ENCODE measurements at regions of chr18 and their contacts with region 1.

Region 1: GRCh38 chr18:22703883-22704585 is 229.1 kb upstream of the RBBP8 start:
- DNase-seq: no peak
- ATAC-seq: peak; percentile 93
- H3K4me3 ChIP-seq: no peak overlapping the region
- H3K27ac ChIP-seq: no peak overlapping the region
- H3K4me1 ChIP-seq: no peaks in the 10 kb centered on the region
- H3K27me3 ChIP-seq: no peaks in the 10 kb centered on the region
- CTCF ChIP-seq: peak; percentile 67 to 75 (median 74)
- EP300 ChIP-seq: no peak
- POLR2A ChIP-seq: no peak
- RAD21 ChIP-seq: peak; percentile 81

Region 2: DNA sequence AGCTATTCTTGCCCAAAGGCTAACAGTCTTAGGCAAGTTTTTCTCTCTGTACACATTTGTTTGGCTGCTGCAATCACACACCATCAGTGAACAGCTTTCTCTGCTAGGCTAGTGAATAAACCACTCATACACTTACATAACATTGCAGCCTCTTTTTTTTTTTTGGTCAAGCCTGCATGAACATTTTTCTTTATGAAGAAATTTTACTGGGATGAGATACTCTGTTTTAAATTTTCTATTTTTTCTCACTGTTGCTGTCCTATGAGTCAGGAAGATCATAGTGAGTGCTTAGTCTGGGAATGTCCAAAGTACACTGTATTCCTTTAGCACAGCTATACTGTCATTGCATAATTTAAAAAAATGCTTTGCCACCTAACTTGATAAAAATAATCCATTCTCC is 1650.9 kb before region 1 on chr18:
- CTCF ChIA-PET with region 1: no interaction called
- POLR2A ChIA-PET with region 1: no interaction called
- RAD21 ChIA-PET with region 1: no interaction called
- SMC1A ChIA-PET with region 1: no interaction called
- in situ Hi-C with region 1: loop called (anchors 25 kb)
- intact Hi-C with region 1: no loop called
- DNase-seq: no peak
- ATAC-seq: no peak
- H3K4me3 ChIP-seq: no peak overlapping the region
- H3K27ac ChIP-seq: no peak overlapping the region
- H3K4me1 ChIP-seq: no peaks in the 10 kb centered on the region; the same call in 1 of the 2 replicates
- H3K27me3 ChIP-seq: no peaks in the 10 kb centered on the region
- CTCF ChIP-seq: no peak
- EP300 ChIP-seq: no peak
- POLR2A ChIP-seq: no peak
- RAD21 ChIP-seq: no peak

Region 3: GRCh38 chr18:21489119-21489750 is 1214.8 kb before region 1 on chr18:
- CTCF ChIA-PET with region 1: no interaction called
- POLR2A ChIA-PET with region 1: no interaction called
- RAD21 ChIA-PET with region 1: no interaction called
- SMC1A ChIA-PET with region 1: no interaction called
- in situ Hi-C with region 1: loop called (anchors 10 kb)
- intact Hi-C with region 1: no loop called
- DNase-seq: no peak
- ATAC-seq: peak; percentile 90
- H3K4me3 ChIP-seq: no peak overlapping the region
- H3K27ac ChIP-seq: no peak overlapping the region
- H3K4me1 ChIP-seq: no peaks in the 10 kb centered on the region
- H3K27me3 ChIP-seq: no peaks in the 10 kb centered on the region
- CTCF ChIP-seq: peak; percentile 73 to 76 (median 75)
- EP300 ChIP-seq: no peak
- POLR2A ChIP-seq: no peak
- RAD21 ChIP-seq: peak; percentile 73

Region 4: GRCh38 chr18:21997207-21998143 is 706.6 kb before region 1 on chr18:
- CTCF ChIA-PET with region 1: interaction called, 6 read pairs
- POLR2A ChIA-PET with region 1: no interaction called
- RAD21 ChIA-PET with region 1: no interaction called
- SMC1A ChIA-PET with region 1: interaction called, 3 read pairs
- in situ Hi-C with region 1: loop called (anchors 10 kb)
- intact Hi-C with region 1: loop called (anchors 10 kb)
- DNase-seq: peak; percentile 9
- ATAC-seq: peak; percentile 79
- H3K4me3 ChIP-seq: no peak overlapping the region
- H3K27ac ChIP-seq: no peak overlapping the region
- H3K4me1 ChIP-seq: no peaks in the 10 kb centered on the region
- H3K27me3 ChIP-seq: no peaks in the 10 kb centered on the region
- CTCF ChIP-seq: peak; percentile 73 to 86 (median 83)
- EP300 ChIP-seq: no peak
- POLR2A ChIP-seq: no peak
- RAD21 ChIP-seq: peak; percentile 60

Region 5: GRCh38 chr18:22609642-22610041 is 94.4 kb before region 1 on chr18:
- CTCF ChIA-PET with region 1: no interaction called
- POLR2A ChIA-PET with region 1: no interaction called
- RAD21 ChIA-PET with region 1: no interaction called
- SMC1A ChIA-PET with region 1: no interaction called
- in situ Hi-C with region 1: loop called (anchors 25 kb)
- intact Hi-C with region 1: loop called (anchors 5 kb)
- DNase-seq: no peak
- ATAC-seq: no peak
- H3K4me3 ChIP-seq: no peak overlapping the region
- H3K27ac ChIP-seq: no peak overlapping the region
- H3K4me1 ChIP-seq: no peaks in the 10 kb centered on the region
- H3K27me3 ChIP-seq: no peaks in the 10 kb centered on the region; a peak in 2 of 4 replicates
- CTCF ChIP-seq: no peak
- EP300 ChIP-seq: no peak
- POLR2A ChIP-seq: no peak
- RAD21 ChIP-seq: no peak